ENCODE measurements at regions of chr6 and their contacts with region 1.

Region 1: DNA sequence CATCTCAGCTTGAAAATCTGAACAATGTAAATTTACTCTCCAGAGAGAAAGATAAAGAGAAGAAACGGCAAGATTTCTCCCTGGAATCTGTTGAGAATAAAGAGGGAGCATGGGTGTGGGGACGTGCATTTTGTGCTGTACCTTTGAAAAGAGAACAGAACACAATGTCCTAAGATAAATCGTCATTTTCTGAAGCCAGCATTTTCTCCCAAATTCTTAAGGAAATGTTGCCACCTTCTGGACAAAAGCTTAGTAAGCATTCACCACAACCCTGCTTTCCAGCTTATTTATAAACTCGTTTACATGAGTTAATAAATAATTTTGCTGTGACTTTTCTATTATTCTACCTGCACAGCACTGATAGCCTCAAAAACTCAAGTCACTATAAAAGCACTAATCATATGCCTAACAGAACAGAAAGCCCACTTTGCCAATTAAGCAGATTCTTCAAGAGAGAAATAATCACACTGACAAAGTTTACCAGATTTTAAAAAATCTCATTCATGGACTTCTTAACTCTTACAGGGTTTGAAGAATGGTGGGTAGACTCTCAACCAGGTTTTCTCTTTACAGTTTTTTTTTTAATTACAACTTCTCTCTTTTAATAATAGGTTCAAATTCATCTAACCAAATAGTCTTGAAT is 155.8 kb downstream of the MBOAT1 start:
- DNase-seq: peak; percentile 50
- H3K4me3 ChIP-seq: no peak overlapping the region
- H3K27ac ChIP-seq: no peak overlapping the region
- H3K4me1 ChIP-seq: no peaks in the 10 kb centered on the region
- CTCF ChIP-seq: peak; percentile 81

Region 2: DNA sequence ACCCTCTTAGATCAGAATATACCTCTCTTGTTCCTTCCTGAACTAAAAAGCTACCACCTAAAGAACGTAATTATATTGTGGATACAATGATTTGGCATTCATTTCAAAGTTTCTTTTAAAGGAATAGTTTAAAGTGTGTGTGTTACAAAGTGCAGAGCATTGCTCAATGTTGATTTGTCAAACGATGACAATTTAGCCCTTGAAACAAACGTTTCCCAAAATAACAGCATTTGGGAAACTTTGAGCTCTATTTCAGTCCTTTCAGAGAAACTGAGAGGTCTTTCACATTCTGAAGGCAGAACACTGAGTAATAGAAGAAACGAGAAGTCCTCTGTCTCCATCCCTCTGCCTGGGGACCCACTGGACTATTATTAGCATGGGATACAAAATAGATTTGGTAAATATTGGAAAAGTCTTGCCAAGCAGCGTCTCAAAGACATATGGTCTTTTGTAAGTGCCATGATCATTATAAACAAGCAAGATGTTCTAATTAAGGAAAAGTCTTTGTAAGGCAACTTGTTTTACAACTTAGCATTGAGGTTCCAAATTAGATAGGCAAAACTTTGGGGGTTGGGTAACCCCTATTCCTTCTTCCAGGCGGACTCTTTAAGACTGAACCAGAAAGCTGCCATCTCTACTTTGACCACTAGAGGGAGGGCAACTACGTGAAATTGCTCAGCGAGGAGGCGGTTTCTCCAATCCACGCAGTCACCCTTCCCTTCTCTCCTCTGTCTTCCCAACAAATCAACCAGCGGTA is 1460.5 kb before region 1 on chr6:
- CTCF ChIA-PET with region 1: no interaction called
- POLR2A ChIA-PET with region 1: no interaction called
- intact Hi-C with region 1: loop called (anchors 10 kb)
- DNase-seq: peak; percentile 57
- H3K4me3 ChIP-seq: no peak overlapping the region
- H3K27ac ChIP-seq: no peak overlapping the region
- H3K4me1 ChIP-seq: no peaks in the 10 kb centered on the region
- CTCF ChIP-seq: peak; percentile 98

Region 3: DNA sequence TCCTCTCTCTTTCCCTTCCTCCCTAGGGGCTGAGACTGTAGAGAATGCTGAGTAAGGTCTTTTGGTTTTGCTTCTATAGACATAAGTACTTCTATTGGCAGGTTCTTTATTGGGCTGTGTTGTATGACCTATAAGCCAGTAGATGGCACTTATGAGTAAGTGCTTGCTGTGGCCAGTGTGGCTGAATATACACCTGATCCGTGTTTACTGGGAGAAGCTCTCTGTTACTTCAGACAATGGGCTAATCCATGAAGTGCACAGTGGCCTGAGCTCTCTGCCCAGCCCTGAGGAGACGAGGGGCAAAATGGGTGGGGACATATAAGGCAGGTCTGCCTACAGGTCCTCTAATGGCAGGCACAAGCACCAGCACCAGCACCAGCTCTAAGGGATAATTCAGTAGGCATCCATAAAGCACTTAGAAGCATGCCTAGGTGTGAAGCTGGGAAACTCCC is 1059.1 kb before region 1 on chr6:
- CTCF ChIA-PET with region 1: no interaction called
- POLR2A ChIA-PET with region 1: no interaction called
- intact Hi-C with region 1: loop called (anchors 2 kb)
- DNase-seq: peak; percentile 57
- H3K4me3 ChIP-seq: no peak overlapping the region
- H3K27ac ChIP-seq: no peak overlapping the region
- H3K4me1 ChIP-seq: no peaks in the 10 kb centered on the region
- CTCF ChIP-seq: peak; percentile 80

Region 4: DNA sequence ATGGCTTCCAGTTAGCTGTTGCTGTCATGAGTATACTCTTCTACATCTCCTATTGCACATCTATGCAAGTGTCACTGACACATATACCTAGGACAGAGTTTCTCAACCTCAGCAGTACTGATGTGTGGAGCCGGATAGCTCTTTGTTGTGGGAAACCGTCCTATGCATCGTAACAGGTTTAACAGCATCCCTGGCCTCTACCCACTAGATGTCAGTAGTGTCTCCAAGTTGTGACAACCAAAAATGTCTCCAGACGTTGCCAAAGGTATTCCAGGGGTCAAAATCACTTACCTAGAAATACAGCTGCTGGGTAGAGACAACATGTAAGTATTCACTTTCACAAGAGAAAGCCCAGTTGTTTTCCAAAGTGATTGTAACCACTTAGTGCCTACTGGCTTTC is 1031.7 kb before region 1 on chr6:
- CTCF ChIA-PET with region 1: no interaction called
- POLR2A ChIA-PET with region 1: no interaction called
- intact Hi-C with region 1: loop called (anchors 10 kb)
- DNase-seq: peak; percentile 41
- H3K4me3 ChIP-seq: no peak overlapping the region
- H3K27ac ChIP-seq: no peak overlapping the region
- H3K4me1 ChIP-seq: no peaks in the 10 kb centered on the region
- CTCF ChIP-seq: peak; percentile 77

Region 5: GRCh38 chr6:20038410-20039204 is 17.9 kb before region 1 on chr6:
- CTCF ChIA-PET with region 1: no interaction called
- POLR2A ChIA-PET with region 1: no interaction called
- intact Hi-C with region 1: no loop called
- DNase-seq: no peak
- H3K4me3 ChIP-seq: no peak overlapping the region
- H3K27ac ChIP-seq: no peak overlapping the region
- H3K4me1 ChIP-seq: no peaks in the 10 kb centered on the region
- CTCF ChIP-seq: no peak

Measured in OCI-LY7 (cell line).